Naive thymus-derived CD4-positive, alpha-beta T cell (primary cell): ENCODE measurements at regions of chr1 and their contacts with region 1.

Region 1: DNA sequence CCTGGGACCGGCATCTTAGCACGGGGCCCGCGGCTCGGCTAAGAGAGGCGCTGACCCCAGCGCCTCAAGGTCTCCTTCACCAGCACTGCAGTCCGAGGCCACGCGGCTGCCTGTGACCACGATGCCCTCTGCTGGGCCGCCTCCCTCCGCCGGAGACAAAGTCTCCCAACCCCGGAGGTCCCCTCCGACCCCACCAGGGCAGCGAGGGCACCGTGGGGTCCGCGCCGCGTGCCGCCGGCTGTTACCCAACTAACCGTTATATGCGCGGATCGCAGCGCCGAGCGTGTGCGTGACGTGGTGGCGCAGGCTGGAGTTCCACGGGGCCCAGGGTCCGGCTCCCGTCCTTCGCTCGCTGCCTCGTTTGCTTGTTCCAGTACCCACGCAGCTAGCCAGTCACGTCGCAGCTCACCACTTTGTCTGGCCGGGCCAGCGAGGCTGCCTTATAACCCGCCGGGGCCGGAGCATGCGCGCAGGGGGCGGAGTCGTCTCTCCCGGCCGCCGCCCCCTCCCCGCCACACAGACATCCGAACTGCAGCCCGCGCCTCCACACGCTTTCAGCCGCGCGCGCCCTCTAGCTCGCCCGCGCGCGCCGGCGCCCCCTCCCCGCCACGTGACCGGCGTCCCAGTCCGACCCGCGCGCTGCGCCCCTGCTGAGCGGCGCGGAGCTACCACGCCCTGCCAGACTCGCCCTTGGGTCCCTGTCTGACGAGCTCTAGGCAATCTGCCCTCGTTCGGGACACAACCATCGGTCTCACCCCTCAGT is at the start of gene SLC16A1:
- DNase-seq: peak; percentile 80 to 94 (median 87)
- ATAC-seq: peak; percentile 90
- H3K4me3 ChIP-seq: peak within 1 kb of the TSS; percentile 97
- H3K4me3 Mint-ChIP-seq: peak within 1 kb of the TSS; percentile 71 to 100 (median 97)
- H3K27ac ChIP-seq: peak within 1 kb of the TSS; percentile 81
- H3K27ac Mint-ChIP-seq: peak within 1 kb of the TSS; percentile 25 to 100 (median 88)
- H3K4me1 ChIP-seq: peaks cover 16 to 17% of the 10 kb centered on the region in 2 donors
- H3K4me1 Mint-ChIP-seq: peaks cover 33 to 66% (median 57%) of the 10 kb centered on the region in 7 donors
- H3K27me3 ChIP-seq: no peaks in the 10 kb centered on the region
- H3K27me3 Mint-ChIP-seq: no peaks in the 10 kb centered on the region
- total RNA-seq, gene SLC16A1: 10.1 to 43.6 (median 19.1) TPM

Region 2: DNA sequence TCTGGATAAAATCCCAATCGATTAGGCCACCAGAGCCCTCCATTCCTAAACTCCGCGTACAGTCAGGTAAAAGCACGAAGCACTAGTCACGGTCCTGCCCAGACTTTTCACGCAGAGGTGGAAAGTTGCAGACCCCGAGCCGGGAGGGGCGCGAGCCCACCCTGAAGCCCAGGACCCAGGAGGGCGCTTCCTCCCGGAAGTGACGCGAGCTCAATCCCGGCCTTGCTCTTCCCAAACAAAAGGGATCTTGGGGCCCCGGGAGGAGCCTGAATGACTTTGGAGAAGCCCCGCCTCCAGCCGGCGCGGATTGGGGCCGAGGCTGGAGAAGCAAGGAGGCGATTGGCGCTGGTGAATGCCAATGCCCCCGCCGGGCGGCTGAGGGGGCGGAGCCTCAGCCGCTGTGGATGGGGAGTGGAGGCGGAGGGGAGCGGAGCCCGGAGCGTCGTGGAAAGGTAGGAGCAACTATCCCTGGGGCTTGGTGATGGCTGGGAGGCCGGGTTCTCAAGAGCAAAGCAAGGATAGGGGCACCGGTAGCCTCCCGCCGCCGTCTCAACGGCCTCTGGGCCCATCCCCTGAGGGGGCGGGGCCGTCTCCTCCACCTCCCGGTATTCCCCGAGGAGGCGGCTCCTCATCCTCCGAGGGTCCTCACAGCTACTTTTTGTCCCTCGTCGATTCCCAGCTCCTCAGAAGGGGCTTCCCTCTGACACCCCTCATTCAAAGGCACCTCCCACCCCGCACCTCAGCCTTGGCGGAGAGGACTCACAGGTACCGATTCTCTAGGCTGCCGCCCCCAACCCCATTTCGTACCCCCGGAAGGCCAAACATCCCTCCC is 559.9 kb before region 1 on chr1 and contains the start of gene CTTNBP2NL:
- CTCF ChIA-PET with region 1: no interaction called
- POLR2A ChIA-PET with region 1: no interaction called
- intact Hi-C with region 1: loop called (anchors 5 kb)
- DNase-seq: peak; percentile 40 to 83 (median 67)
- ATAC-seq: peak; percentile 95
- H3K4me3 ChIP-seq: peak within 1 kb of the TSS; percentile 91
- H3K4me3 Mint-ChIP-seq: peak within 1 kb of the TSS; percentile 80 to 95 (median 92)
- H3K27ac ChIP-seq: peak within 1 kb of the TSS; percentile 32
- H3K27ac Mint-ChIP-seq: peak within 1 kb of the TSS in 8 of 9 donors; percentile 6 to 88 (median 60)
- H3K4me1 ChIP-seq: peaks cover 7 to 14% of the 10 kb centered on the region in 2 donors
- H3K4me1 Mint-ChIP-seq: peaks cover 13 to 37% (median 20%) of the 10 kb centered on the region in 7 donors
- H3K27me3 ChIP-seq: peaks cover 0 to 3% of the 10 kb centered on the region in 2 donors
- H3K27me3 Mint-ChIP-seq: peaks cover 13 to 26% (median 18%) of the 10 kb centered on the region in 5 donors
- total RNA-seq, gene CTTNBP2NL: 0.32 to 1.8 (median 0.90) TPM

Region 3: GRCh38 chr1:112809253-112809684 is 146.7 kb before region 1 on chr1:
- CTCF ChIA-PET with region 1: no interaction called
- POLR2A ChIA-PET with region 1: no interaction called
- intact Hi-C with region 1: loop called (anchors 2 to 5 kb)
- DNase-seq: peak; percentile 19 to 71 (median 38)
- ATAC-seq: peak; percentile 87
- H3K4me3 ChIP-seq: no peak overlapping the region
- H3K4me3 Mint-ChIP-seq: no peak overlapping the region
- H3K27ac ChIP-seq: no peak overlapping the region
- H3K27ac Mint-ChIP-seq: no peak overlapping the region
- H3K4me1 ChIP-seq: no peaks in the 10 kb centered on the region
- H3K4me1 Mint-ChIP-seq: no peaks in the 10 kb centered on the region
- H3K27me3 ChIP-seq: no peaks in the 10 kb centered on the region
- H3K27me3 Mint-ChIP-seq: peaks cover 0 to 26% (median 0%) of the 10 kb centered on the region in 5 donors

Region 4: DNA sequence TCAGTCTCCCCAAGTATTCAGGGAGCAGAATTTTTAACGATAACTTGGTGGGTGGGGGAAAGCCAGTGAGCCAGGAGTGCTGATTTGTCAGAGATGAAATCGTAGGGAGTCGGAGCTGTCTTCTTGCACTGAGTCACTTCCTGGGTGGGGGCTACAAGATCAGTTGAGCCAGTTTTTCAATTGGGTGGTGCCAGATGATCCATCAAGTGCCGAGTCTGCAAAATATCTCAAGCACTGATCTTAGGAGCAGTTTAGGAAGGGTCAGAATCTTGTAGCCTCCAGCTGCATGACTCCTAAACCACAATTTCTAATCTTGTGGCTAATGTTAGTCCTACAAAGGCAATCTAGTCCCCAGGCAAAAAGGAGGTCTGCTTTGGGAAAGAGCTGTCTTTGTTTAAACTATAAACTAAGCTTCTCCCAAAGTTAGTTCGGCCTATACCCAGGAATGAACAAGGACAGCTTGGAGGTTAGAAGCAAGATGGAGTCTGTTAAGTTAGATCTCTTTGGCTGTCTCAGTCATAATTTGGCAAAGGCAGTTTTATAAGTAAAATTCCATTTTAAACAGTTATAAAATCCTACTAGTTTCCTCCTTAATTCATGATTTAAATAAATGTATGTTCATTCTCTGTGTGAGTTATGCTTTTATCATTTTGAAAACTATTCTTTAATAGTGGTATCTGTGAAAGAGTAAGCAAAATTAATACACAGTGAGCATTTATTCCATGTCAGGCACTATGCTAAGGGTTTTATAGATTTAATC is 51.7 kb before region 1 on chr1:
- CTCF ChIA-PET with region 1: no interaction called
- POLR2A ChIA-PET with region 1: no interaction called
- intact Hi-C with region 1: loop called in 1 of 2 experiments (anchors 10 kb)
- DNase-seq: peak in 1 of 9 donors; percentile 64
- ATAC-seq: no peak
- H3K4me3 ChIP-seq: no peak overlapping the region
- H3K4me3 Mint-ChIP-seq: peak overlapping the region in 1 of 10 donors; percentile 58
- H3K27ac ChIP-seq: no peak overlapping the region
- H3K27ac Mint-ChIP-seq: peak overlapping the region in 3 of 9 donors; percentile 15 to 81 (median 44)
- H3K4me1 ChIP-seq: no peaks in the 10 kb centered on the region
- H3K4me1 Mint-ChIP-seq: peaks cover 0 to 25% (median 5%) of the 10 kb centered on the region in 7 donors
- H3K27me3 ChIP-seq: no peaks in the 10 kb centered on the region
- H3K27me3 Mint-ChIP-seq: no peaks in the 10 kb centered on the region

Region 5: DNA sequence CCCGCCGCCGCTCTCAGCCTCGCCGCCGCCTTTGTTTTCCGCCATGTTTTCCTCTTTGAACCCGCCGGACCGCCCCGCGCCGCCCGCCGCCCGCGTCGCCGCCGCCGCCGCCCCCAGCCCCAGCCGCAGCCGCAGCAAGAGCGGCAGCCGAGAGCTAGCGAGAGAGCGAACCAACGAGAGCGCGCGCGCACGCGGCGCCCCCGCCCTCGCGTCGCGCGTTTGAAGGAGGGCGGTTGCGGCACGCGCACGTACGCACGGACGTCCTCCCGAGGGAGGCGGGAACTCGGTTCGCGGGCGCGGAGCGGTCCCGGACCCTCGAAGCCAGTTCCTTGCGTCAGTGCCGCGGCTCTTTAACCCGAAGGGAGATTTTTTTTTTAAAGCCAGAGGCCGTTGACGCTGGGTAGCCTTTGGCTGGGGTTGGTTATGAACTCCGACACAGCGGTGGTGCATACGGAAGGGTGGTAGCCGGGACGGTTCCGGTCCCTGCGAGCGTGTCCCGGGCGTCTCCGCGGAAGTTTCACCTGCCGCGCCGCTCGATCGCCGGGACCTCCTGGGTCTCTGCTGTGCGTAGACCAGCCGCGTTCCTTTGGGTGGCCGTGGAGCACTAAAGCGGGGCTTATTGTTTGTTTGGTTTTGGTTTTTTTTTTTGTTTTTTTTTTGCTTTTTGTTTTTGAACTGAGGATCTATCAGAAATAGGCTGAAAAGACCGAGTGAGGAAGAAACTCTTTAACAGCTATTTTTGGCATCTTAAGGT is 1555.2 kb after region 1 on chr1 and contains the start of gene TRIM33:
- CTCF ChIA-PET with region 1: no interaction called
- POLR2A ChIA-PET with region 1: no interaction called
- intact Hi-C with region 1: loop called in 1 of 2 experiments (anchors 1 kb)
- DNase-seq: peak; percentile 91 to 95 (median 93)
- ATAC-seq: peak; percentile 89
- H3K4me3 ChIP-seq: peak within 1 kb of the TSS; percentile 71
- H3K4me3 Mint-ChIP-seq: peak within 1 kb of the TSS; percentile 86 to 99 (median 97)
- H3K27ac ChIP-seq: peak within 1 kb of the TSS; percentile 100
- H3K27ac Mint-ChIP-seq: peak within 1 kb of the TSS; percentile 98 to 100 (median 99)
- H3K4me1 ChIP-seq: peaks cover 22 to 29% of the 10 kb centered on the region in 2 donors
- H3K4me1 Mint-ChIP-seq: peaks cover 41 to 63% (median 52%) of the 10 kb centered on the region in 7 donors
- H3K27me3 ChIP-seq: no peaks in the 10 kb centered on the region
- H3K27me3 Mint-ChIP-seq: peaks cover 0 to 7% (median 0%) of the 10 kb centered on the region in 5 donors
- total RNA-seq, gene TRIM33: 43.8 to 57.6 (median 51.1) TPM

Region 6: DNA sequence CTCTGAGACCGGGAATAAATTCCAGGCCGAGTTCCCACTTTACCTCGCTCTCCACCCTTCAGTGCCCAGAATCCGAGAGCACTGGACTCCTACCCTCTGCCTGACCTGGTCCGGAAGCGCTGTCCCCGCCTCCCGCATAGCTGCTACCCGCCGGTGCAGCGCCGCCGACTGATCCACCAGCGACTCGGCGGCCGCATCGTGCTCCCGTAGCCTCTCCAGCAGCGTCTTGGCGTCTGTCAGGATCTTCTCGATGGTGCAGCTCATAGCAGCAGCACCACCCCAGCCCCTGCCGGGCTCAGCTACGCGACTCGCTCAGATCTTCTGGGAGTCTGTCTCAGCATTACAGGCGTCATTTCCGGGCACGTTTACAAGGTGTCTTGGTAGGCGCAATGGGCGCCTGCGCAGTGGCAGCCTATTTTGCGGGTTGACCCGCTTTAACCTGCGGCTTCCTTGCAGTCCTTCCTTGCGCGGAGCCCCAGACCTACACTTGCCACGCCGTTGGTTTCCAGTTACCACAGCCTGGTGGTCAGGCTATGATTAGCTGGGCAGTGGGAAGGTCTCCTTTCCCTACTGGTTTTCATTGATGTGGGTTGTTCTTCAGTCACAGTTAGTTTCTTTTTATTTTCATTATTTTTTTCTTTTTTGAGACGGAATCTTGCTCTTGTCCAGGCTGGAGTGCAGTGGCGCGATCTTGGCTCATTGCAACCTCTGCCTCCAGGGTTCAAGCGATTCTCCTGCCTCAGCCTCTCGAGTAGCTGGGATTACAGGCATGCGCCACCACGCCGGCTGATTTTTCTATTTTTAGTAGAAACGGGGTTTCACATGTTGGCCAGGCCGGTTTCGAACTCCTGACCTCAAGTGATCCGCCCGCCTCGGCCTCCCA is 1824.6 kb after region 1 on chr1 and contains the start of gene SIKE1:
- CTCF ChIA-PET with region 1: no interaction called
- POLR2A ChIA-PET with region 1: no interaction called
- intact Hi-C with region 1: loop called in 1 of 2 experiments (anchors 5 kb)
- DNase-seq: peak; percentile 82 to 98 (median 95)
- ATAC-seq: peak; percentile 99
- H3K4me3 ChIP-seq: peak within 1 kb of the TSS; percentile 78
- H3K4me3 Mint-ChIP-seq: peak within 1 kb of the TSS; percentile 98 to 100 (median 100)
- H3K27ac ChIP-seq: peak within 1 kb of the TSS; percentile 87
- H3K27ac Mint-ChIP-seq: peak within 1 kb of the TSS; percentile 96 to 100 (median 99)
- H3K4me1 ChIP-seq: peaks cover 0 to 8% of the 10 kb centered on the region in 2 donors
- H3K4me1 Mint-ChIP-seq: peaks cover 19 to 40% (median 30%) of the 10 kb centered on the region in 7 donors
- H3K27me3 ChIP-seq: no peaks in the 10 kb centered on the region
- H3K27me3 Mint-ChIP-seq: peaks cover 0 to 17% (median 0%) of the 10 kb centered on the region in 5 donors
- total RNA-seq, gene SIKE1: 43.4 to 69.4 (median 61.2) TPM